Activated CD8-positive, alpha-beta T cell treated with anti-CD3 and anti-CD28 coated beads for 36 hours (primary cell): ENCODE measurements at regions of chr9 and their contacts with region 1.

Region 1: GRCh38 chr9:113511856-113512761 is 48.6 kb downstream of the RGS3 start:
- DNase-seq: peak; percentile 97
- ATAC-seq: peak; percentile 74
- H3K4me3 Mint-ChIP-seq: peak overlapping the region; percentile 55
- H3K27ac Mint-ChIP-seq: peak overlapping the region; percentile 97
- H3K4me1 Mint-ChIP-seq: peaks cover 66% of the 10 kb centered on the region
- H3K27me3 Mint-ChIP-seq: no peaks in the 10 kb centered on the region
- CTCF ChIP-seq: no peak

Region 2: DNA sequence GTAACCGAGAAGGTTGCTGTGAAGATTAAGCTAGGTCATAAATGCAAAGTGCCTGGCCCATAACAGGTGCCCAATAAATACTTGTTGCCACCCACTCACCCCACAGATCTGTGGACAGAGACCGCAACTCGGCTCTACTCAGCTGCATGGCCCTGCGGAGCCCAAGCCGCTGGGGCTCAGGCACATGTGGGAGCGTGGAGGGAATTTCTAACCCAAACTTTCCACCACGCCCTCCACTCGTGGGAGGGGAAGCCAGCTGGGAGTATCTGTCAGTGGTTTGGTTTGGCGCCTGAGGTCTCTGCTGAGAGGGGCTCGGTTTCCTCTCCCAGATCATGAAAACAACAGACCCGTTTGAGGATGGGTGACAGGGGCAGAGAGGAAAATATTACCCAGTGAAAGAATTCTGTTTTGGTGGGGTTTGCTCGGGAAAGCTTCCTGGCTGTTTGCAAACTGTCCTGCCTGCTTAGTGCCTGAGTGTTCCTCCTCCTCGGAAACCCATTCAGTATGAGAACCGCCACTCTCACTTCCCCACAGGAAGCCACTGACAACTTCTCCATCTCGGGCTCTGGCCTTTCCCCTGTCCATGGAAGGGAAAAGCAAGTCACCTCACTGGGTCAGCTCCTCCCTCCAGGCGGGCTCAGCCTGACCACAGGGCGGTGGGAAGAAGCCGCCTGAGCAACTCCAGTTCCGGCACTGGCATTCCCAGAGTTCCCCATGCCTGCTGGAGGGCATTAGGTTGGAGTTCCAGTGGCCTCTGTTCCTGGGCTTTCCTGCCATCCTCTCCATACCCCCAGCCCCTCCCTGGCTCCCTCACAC is 11.5 kb after region 1 on chr9:
- CTCF ChIA-PET with region 1: interaction called, 14 read pairs
- POLR2A ChIA-PET with region 1: interaction called, 30 read pairs
- intact Hi-C with region 1: loop called (anchors 1 kb)
- DNase-seq: peak; percentile 88
- ATAC-seq: peak; percentile 52
- H3K4me3 Mint-ChIP-seq: peak overlapping the region; percentile 69
- H3K27ac Mint-ChIP-seq: peak overlapping the region; percentile 71
- H3K4me1 Mint-ChIP-seq: peaks cover 88% of the 10 kb centered on the region
- H3K27me3 Mint-ChIP-seq: no peaks in the 10 kb centered on the region
- CTCF ChIP-seq: no peak